ENCODE measurements at regions of chr1 and their contacts with region 1.

Region 1: GRCh38 chr1:223133824-223134435 is 9.1 kb downstream of the TLR5 start:
- DNase-seq: peak; percentile 86 to 91
- H3K4me3 ChIP-seq: peak overlapping the region; percentile 33
- H3K4me3 Mint-ChIP-seq: peak overlapping the region; percentile 77
- H3K27ac Mint-ChIP-seq: peak overlapping the region; percentile 77
- H3K4me1 ChIP-seq: peaks cover 25% of the 10 kb centered on the region; the same call in 1 of the 2 replicates
- H3K4me1 Mint-ChIP-seq: peaks cover 15% of the 10 kb centered on the region
- H3K27me3 ChIP-seq: no peaks in the 10 kb centered on the region
- H3K27me3 Mint-ChIP-seq: no peaks in the 10 kb centered on the region
- CTCF ChIP-seq: peak; percentile 90 to 96

Region 2: GRCh38 chr1:223087291-223088255 is 46.4 kb before region 1 on chr1:
- CTCF ChIA-PET with region 1: interaction called, 13 read pairs
- POLR2A ChIA-PET with region 1: no interaction called
- intact Hi-C with region 1: no loop called
- DNase-seq: no peak
- H3K4me3 ChIP-seq: no peak overlapping the region
- H3K4me3 Mint-ChIP-seq: no peak overlapping the region
- H3K27ac Mint-ChIP-seq: no peak overlapping the region
- H3K4me1 ChIP-seq: peaks cover 7% of the 10 kb centered on the region; the same call in 1 of the 2 replicates
- H3K4me1 Mint-ChIP-seq: peaks cover 27% of the 10 kb centered on the region
- H3K27me3 ChIP-seq: no peaks in the 10 kb centered on the region
- H3K27me3 Mint-ChIP-seq: no peaks in the 10 kb centered on the region
- CTCF ChIP-seq: no peak

Region 3: DNA sequence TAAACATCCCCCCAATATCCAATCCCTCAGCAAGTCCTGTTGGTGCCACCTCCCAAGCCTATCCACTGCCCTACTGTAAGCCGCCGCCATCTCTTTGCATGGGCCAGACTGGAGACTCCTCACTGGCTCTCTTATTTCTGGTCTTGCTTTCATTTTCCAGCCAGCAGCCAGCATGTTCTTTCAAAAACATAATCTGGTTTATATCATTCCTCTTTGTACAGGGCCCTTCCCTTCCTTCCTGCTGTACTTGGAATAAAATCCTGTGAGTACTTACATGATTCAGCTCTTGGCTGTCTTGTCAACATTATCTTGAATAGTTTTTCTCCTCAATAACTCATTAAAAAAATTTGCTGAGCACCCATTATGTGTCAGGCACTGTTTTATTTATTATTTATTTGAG is 19.1 kb before region 1 on chr1:
- CTCF ChIA-PET with region 1: interaction called, 6 read pairs
- POLR2A ChIA-PET with region 1: interaction called, 3 read pairs
- intact Hi-C with region 1: loop called (anchors 1 kb)
- DNase-seq: no peak
- H3K4me3 ChIP-seq: no peak overlapping the region
- H3K4me3 Mint-ChIP-seq: no peak overlapping the region
- H3K27ac Mint-ChIP-seq: no peak overlapping the region
- H3K4me1 ChIP-seq: peaks cover 28% of the 10 kb centered on the region
- H3K4me1 Mint-ChIP-seq: peaks cover 29% of the 10 kb centered on the region
- H3K27me3 ChIP-seq: no peaks in the 10 kb centered on the region; the same call in 1 of the 2 replicates
- H3K27me3 Mint-ChIP-seq: no peaks in the 10 kb centered on the region
- CTCF ChIP-seq: no peak

Region 4: GRCh38 chr1:223123011-223123610 is 10.8 kb before region 1 on chr1:
- CTCF ChIA-PET with region 1: interaction called, 29 read pairs
- POLR2A ChIA-PET with region 1: interaction called, 3 read pairs
- intact Hi-C with region 1: loop called (anchors 1 kb)
- DNase-seq: no peak
- H3K4me3 ChIP-seq: no peak overlapping the region
- H3K4me3 Mint-ChIP-seq: peak overlapping the region; percentile 49
- H3K27ac Mint-ChIP-seq: no peak overlapping the region
- H3K4me1 ChIP-seq: peaks cover 29% of the 10 kb centered on the region
- H3K4me1 Mint-ChIP-seq: peaks cover 20% of the 10 kb centered on the region
- H3K27me3 ChIP-seq: no peaks in the 10 kb centered on the region
- H3K27me3 Mint-ChIP-seq: no peaks in the 10 kb centered on the region
- CTCF ChIP-seq: no peak

Region 5: GRCh38 chr1:223208164-223209076 is 74.5 kb after region 1 on chr1:
- CTCF ChIA-PET with region 1: interaction called, 5 read pairs
- POLR2A ChIA-PET with region 1: no interaction called
- intact Hi-C with region 1: loop called (anchors 2 kb)
- DNase-seq: no peak
- H3K4me3 ChIP-seq: no peak overlapping the region
- H3K4me3 Mint-ChIP-seq: no peak overlapping the region
- H3K27ac Mint-ChIP-seq: peak overlapping the region; percentile 51
- H3K4me1 ChIP-seq: peaks cover 47% of the 10 kb centered on the region
- H3K4me1 Mint-ChIP-seq: peaks cover 55% of the 10 kb centered on the region
- H3K27me3 ChIP-seq: no peaks in the 10 kb centered on the region
- H3K27me3 Mint-ChIP-seq: no peaks in the 10 kb centered on the region
- CTCF ChIP-seq: no peak

Region 6: DNA sequence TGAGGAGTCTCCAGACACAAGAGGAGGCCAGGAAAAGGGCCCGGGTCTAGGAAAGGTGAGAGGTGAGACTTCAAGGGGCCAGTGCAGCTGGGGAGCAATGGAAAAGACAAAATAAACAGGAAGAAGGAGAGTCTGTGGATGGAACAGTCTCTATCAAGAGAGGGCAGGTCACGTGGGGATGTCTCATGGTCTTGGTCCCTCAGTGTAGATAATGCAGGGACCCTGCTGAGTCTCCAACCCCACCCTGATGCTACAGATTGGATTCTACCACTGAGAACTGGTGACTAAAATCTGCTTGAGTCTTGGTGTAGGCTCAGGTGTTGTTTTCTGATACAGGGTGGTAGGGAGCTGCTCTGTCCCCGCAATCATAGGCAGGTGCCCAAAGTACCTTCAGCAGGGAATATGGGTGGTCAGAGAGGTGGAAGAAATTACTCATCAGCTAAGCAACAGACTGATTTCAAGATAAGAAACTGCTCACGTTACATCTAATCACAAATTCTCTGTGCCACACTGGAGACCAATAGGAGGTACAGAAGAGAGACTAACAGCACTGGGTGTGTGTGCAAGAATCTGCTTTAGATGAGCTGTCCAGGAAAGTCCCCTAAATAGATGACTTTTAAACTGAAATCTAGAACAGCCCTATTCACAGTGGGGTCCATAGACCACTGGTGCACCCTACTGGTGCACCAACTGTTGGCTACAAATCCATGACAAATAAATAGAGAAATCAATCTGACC is 110.6 kb after region 1 on chr1:
- CTCF ChIA-PET with region 1: interaction called, 9 read pairs
- POLR2A ChIA-PET with region 1: no interaction called
- intact Hi-C with region 1: loop called (anchors 1 kb)
- DNase-seq: no peak
- H3K4me3 ChIP-seq: no peak overlapping the region
- H3K4me3 Mint-ChIP-seq: no peak overlapping the region
- H3K27ac Mint-ChIP-seq: peak overlapping the region; percentile 24
- H3K4me1 ChIP-seq: peaks cover 18% of the 10 kb centered on the region
- H3K4me1 Mint-ChIP-seq: peaks cover 16% of the 10 kb centered on the region
- H3K27me3 ChIP-seq: no peaks in the 10 kb centered on the region
- H3K27me3 Mint-ChIP-seq: no peaks in the 10 kb centered on the region
- CTCF ChIP-seq: peak in 1 of 2 experiments; percentile 20

Region 7: GRCh38 chr1:223319905-223320600 is 186.1 kb after region 1 on chr1:
- CTCF ChIA-PET with region 1: no interaction called
- POLR2A ChIA-PET with region 1: no interaction called
- intact Hi-C with region 1: no loop called
- DNase-seq: no peak
- H3K4me3 ChIP-seq: no peak overlapping the region
- H3K4me3 Mint-ChIP-seq: no peak overlapping the region
- H3K27ac Mint-ChIP-seq: no peak overlapping the region
- H3K4me1 ChIP-seq: no peaks in the 10 kb centered on the region
- H3K4me1 Mint-ChIP-seq: no peaks in the 10 kb centered on the region
- H3K27me3 ChIP-seq: no peaks in the 10 kb centered on the region
- H3K27me3 Mint-ChIP-seq: no peaks in the 10 kb centered on the region
- CTCF ChIP-seq: no peak

Region 8: DNA sequence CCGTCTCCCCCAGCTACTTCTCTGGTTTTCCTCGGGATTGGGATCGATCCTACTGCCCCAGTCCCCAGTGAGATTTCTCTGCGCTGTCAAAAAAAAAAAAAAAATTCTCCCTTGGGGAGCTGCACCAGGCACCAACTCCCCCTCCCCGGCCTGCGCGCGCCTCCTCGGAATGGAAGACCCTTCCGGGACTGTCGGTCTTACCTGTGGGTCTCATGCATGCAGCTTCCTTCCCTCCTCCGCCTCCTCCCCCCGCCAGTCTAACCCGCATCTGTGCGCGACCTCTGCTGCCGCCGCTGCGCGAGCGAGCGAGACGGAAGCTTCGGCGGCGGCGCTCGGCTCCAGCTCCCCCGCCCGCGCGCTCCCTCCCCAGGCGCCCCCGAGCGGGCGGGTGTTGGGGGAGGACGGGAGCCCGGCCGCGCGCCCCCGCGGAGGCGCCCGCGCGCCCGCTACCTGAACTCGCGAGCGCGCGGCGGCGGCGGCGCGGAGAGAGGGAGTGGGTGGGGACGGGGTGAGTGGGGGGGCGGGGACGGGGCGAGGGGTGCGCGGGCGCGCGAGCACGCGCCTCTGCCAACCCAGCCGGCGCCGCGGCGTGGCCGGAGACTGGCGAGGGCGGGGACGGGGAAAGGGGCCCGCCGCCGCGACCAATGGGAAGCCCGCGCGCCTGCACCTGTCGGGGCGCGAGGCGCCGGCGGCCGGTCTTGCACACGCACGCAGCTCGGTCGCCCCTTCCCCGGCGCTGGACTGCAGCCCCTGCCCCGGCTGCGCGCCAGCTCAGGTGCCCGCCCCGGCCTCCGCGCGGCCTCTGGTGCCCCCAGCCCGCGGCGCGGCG is 230.1 kb after region 1 on chr1 and contains the start of gene SUSD4:
- CTCF ChIA-PET with region 1: interaction called, 19 read pairs
- POLR2A ChIA-PET with region 1: no interaction called
- intact Hi-C with region 1: loop called (anchors 5 kb)
- DNase-seq: peak; percentile 59 to 84
- H3K4me3 ChIP-seq: peak within 1 kb of the TSS; percentile 42
- H3K4me3 Mint-ChIP-seq: peak within 1 kb of the TSS; percentile 92
- H3K27ac Mint-ChIP-seq: peak within 1 kb of the TSS; percentile 11
- H3K4me1 ChIP-seq: no peaks in the 10 kb centered on the region; the same call in 1 of the 2 replicates
- H3K4me1 Mint-ChIP-seq: peaks cover 5% of the 10 kb centered on the region
- H3K27me3 ChIP-seq: no peaks in the 10 kb centered on the region; the same call in 1 of the 2 replicates
- H3K27me3 Mint-ChIP-seq: no peaks in the 10 kb centered on the region
- CTCF ChIP-seq: no peak
- total RNA-seq, gene SUSD4: 31.4 and 36.7 TPM in 2 replicates